Pancreas (tissue), 10 donors: ENCODE measurements at regions of chr1 and their contacts with region 1.

Region 1: GRCh38 chr1:18820791-18821641 is 38.4 kb downstream of the TAS1R2 start:
- DNase-seq: peak; percentile 54 to 93 (median 85)
- ATAC-seq: peak; percentile 90 to 98 (median 96)
- H3K4me3 ChIP-seq: no peak overlapping the region
- H3K27ac ChIP-seq: no peak overlapping the region
- H3K4me1 ChIP-seq: no peaks in the 10 kb centered on the region
- H3K27me3 ChIP-seq: peaks cover 0 to 9% (median 0%) of the 10 kb centered on the region in 4 donors
- CTCF ChIP-seq: peak; percentile 86 to 93 (median 90)

Region 2: GRCh38 chr1:18592367-18592766 is 228.6 kb before region 1 on chr1:
- intact Hi-C with region 1: loop called in 1 of 3 experiments (anchors 2 kb)
- DNase-seq: no peak
- ATAC-seq: no peak
- H3K4me3 ChIP-seq: no peak overlapping the region
- H3K27ac ChIP-seq: no peak overlapping the region
- H3K4me1 ChIP-seq: no peaks in the 10 kb centered on the region
- H3K27me3 ChIP-seq: no peaks in the 10 kb centered on the region
- CTCF ChIP-seq: no peak

Region 3: DNA sequence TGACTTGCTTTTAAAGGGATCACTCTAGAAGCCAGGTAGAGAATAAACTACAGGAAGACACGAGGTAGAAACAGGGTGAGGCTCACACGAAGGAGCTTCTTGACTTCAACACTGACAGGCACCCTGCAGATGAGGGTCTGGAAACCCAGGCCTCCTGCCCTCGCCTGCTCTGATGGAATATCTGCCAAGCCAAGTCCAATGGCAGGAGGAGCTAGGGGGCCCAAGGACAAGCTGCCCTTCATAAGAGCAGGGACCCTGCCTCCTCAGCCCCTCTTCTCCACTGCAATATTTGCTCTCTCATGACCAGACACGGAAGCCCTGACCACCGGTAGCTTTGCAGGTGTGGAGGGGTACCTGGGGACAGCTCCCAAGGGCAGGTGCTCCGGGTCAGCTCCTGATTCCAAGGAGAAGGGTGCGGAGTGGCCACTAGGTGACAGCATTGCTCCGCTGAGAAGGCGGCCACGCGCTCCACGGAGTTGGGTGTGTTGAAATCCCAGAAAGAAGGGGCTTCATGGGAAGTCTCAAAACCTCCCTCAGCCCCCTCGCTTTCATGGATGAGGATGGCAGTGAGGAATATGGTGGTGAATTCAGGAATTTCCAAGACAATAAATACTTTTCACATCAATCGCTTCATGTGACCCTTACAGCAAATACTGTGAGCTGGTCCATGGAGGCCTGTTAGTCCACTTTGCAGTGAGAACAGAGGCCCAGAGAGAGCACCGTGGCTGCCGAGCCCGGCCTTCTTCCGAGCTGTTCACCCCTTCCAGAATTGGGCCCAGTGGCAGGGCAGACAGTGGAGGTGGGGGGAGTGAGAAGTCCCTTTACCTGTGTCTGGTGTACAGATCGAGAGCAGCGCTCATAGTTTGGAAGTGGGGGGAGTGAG is 223.6 kb before region 1 on chr1:
- intact Hi-C with region 1: loop called (anchors 2 to 10 kb)
- DNase-seq: peak; percentile 22 to 89 (median 66)
- ATAC-seq: peak; percentile 82 to 94 (median 90)
- H3K4me3 ChIP-seq: no peak overlapping the region
- H3K27ac ChIP-seq: no peak overlapping the region
- H3K4me1 ChIP-seq: no peaks in the 10 kb centered on the region
- H3K27me3 ChIP-seq: peaks cover 0 to 4% (median 0%) of the 10 kb centered on the region in 4 donors
- CTCF ChIP-seq: peak; percentile 68 to 96 (median 93)

Region 4: DNA sequence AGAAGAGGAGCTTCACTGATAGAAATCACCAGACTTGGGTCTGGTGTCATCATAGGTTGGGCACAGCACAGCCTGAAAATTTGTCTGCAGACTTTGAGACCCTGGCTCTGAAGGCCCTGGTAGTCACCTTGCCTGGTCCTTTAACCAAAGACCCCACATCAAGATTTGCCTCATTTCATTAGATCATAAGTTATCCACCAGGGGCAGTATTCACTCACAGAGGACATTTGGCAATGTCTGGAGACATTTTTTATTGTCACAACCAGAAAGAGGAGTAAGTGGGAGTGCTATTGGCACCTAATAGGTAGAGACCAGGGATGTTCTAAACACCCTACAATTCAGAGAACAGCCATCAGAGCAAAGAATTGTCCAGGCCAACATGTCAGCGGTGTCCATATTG is 212.5 kb before region 1 on chr1:
- intact Hi-C with region 1: loop called in 2 of 3 experiments (anchors 5 to 10 kb)
- DNase-seq: no peak
- ATAC-seq: no peak
- H3K4me3 ChIP-seq: no peak overlapping the region
- H3K27ac ChIP-seq: no peak overlapping the region
- H3K4me1 ChIP-seq: no peaks in the 10 kb centered on the region
- H3K27me3 ChIP-seq: peaks cover 0 to 5% (median 0%) of the 10 kb centered on the region in 4 donors
- CTCF ChIP-seq: no peak

Region 5: GRCh38 chr1:18972531-18972930 is 151.5 kb after region 1 on chr1:
- intact Hi-C with region 1: no loop called
- DNase-seq: no peak
- ATAC-seq: peak in 3 of 4 donors; percentile 28 to 48 (median 39)
- H3K4me3 ChIP-seq: no peak overlapping the region
- H3K27ac ChIP-seq: no peak overlapping the region
- H3K4me1 ChIP-seq: no peaks in the 10 kb centered on the region
- H3K27me3 ChIP-seq: no peaks in the 10 kb centered on the region
- CTCF ChIP-seq: no peak